GM10248 (cell line): ENCODE measurements at regions of chr11 and their contacts with region 1.

Region 1: DNA sequence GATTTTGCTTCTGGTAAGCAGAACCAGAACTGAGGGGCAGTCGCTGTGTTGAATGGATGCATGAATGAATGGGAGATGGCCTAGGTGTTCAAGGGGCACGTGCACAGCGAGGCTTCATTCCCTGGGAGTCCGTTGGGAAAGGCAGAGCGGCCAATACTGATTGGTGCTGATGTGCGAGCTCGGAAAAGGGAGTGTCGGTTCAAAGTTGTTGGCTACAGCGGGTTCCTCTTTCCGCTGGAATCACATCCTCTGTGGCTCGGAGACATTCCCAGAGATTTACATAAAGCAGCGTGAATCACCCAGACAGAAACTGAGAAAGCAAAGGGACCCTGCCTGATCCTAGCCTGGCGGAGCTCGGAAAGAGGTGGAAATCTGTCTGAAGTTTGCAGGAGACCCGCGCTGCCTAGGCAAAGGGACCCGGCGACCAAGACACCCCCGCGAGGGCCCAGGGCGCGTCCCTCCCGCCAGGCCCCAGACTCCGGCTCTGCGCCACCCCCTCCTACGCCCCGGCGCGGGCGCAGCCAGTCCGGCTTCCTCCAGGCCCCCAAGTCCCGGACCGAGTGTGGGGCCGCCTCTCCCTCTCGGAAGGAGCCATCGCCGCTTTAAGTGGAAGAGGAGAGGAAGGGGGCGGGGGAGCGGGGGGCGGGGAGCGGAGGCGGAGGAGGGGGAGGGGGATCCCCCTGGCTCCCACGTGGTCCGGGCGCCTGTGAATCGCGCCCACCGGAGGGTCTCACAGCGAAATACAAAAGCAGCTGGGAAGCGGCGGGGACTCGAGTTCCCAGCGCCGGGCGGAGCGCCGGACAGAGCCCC is at the start of gene FJX1:
- DNase-seq: peak; percentile 76
- CTCF ChIP-seq: no peak

Region 2: DNA sequence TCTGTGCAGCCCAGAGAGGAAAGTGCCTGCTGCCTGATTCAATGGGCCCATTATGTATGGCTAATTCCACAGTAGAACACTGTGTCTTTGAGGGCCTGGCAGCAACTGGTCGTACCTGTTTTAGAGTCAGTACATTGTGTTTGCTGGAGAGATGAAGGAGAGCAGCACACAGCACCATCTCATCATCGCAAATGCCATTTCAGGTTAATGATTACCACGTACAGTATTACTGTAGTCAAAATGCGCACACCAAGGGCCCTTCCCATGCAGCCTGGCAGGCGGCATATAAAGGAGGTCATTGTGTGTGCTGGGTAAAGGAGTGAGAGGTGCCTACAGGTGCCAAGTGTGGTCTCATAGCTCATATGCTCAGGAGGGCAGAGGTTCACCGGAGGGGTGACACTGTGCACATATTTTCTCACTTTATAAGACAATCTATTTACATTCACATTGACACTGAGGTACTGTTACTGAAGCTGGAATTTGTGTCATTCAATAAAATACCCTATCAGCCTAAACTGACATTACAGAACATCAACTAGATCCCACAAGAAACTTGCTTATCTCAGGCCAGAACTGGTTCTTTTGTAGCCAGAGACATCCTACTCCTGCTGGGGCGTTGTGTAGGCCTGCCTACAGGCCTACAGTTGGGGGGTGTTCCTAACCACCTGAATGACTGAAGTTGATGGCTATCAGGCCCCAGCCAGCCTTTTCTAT is 792.1 kb before region 1 on chr11:
- CTCF ChIA-PET with region 1: no interaction called
- POLR2A ChIA-PET with region 1: no interaction called
- DNase-seq: no peak
- CTCF ChIP-seq: no peak

Region 3: GRCh38 chr11:36131721-36132397 is 514.0 kb after region 1 on chr11:
- CTCF ChIA-PET with region 1: interaction called, 15 read pairs
- POLR2A ChIA-PET with region 1: no interaction called
- DNase-seq: peak; percentile 45
- CTCF ChIP-seq: peak; percentile 82

Region 4: GRCh38 chr11:36258730-36259360 is 641.0 kb after region 1 on chr11:
- CTCF ChIA-PET with region 1: interaction called, 14 read pairs
- POLR2A ChIA-PET with region 1: no interaction called
- DNase-seq: peak; percentile 40
- CTCF ChIP-seq: peak; percentile 48

Region 5: GRCh38 chr11:36265793-36266628 is 648.1 kb after region 1 on chr11:
- CTCF ChIA-PET with region 1: interaction called, 25 read pairs
- POLR2A ChIA-PET with region 1: no interaction called
- DNase-seq: peak; percentile 73
- CTCF ChIP-seq: peak; percentile 86